A549 (cell line): ENCODE measurements at regions of chr7 and their contacts with region 1.

Region 1: DNA sequence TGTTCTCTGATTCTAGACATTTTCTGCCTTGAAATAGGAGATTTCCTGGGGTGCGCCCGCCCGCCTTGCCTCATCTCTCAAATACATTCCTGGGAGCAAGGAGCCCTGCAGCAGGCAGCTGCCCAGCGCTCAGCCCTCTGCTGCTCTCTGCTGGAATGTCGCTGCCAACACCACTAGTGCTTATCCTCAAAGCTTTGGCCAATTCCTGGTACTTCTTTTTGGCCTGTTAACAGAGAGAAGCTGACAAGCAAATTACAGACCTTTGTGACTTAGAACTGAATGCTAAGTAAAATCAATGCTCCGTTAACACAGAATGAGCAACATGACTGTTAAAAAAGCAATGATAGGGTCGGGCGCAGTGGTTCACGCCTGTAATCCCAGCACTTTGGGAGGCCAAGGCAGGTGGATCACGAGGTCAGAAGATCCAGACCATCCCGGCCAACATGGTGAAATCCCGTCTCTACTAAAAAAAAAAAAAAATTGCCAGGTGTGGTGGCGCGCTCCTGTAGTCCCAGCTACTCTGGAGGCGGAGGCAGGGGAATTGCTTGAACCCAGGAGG is 41.9 kb upstream of the SYPL1 start:
- DNase-seq: peak; percentile 75 to 84
- ATAC-seq: peak; percentile 97 to 99
- H3K4me3 ChIP-seq: no peak overlapping the region
- H3K27ac ChIP-seq: no peak overlapping the region
- H3K4me1 ChIP-seq: peaks cover 20% of the 10 kb centered on the region; the same call in 2 of the 3 replicates
- CTCF ChIP-seq: peak; percentile 87
- EP300 ChIP-seq: no peak
- POLR2A ChIP-seq: no peak
- RAD21 ChIP-seq: peak; percentile 98 to 99

Region 2: GRCh38 chr7:105759670-105760550 is 394.1 kb before region 1 on chr7:
- CTCF ChIA-PET with region 1: interaction called, 39 read pairs
- POLR2A ChIA-PET with region 1: no interaction called
- DNase-seq: peak; percentile 66 to 71
- ATAC-seq: peak; percentile 91 to 93
- H3K4me3 ChIP-seq: no peak overlapping the region
- H3K27ac ChIP-seq: no peak overlapping the region
- H3K4me1 ChIP-seq: no peaks in the 10 kb centered on the region
- CTCF ChIP-seq: peak; percentile 94
- EP300 ChIP-seq: no peak
- POLR2A ChIP-seq: no peak
- RAD21 ChIP-seq: peak; percentile 93 to 94

Region 3: GRCh38 chr7:106056513-106057203 is 97.3 kb before region 1 on chr7:
- CTCF ChIA-PET with region 1: interaction called, 487 read pairs
- POLR2A ChIA-PET with region 1: no interaction called
- DNase-seq: peak; percentile 77 to 81
- ATAC-seq: peak; percentile 91 to 99
- H3K4me3 ChIP-seq: no peak overlapping the region
- H3K27ac ChIP-seq: no peak overlapping the region
- H3K4me1 ChIP-seq: no peaks in the 10 kb centered on the region
- CTCF ChIP-seq: peak; percentile 85
- EP300 ChIP-seq: no peak
- POLR2A ChIP-seq: no peak
- RAD21 ChIP-seq: peak; percentile 88 to 94

Region 4: GRCh38 chr7:106127984-106128780 is 25.8 kb before region 1 on chr7:
- CTCF ChIA-PET with region 1: interaction called, 10 read pairs
- POLR2A ChIA-PET with region 1: no interaction called
- DNase-seq: no peak
- ATAC-seq: no peak
- H3K4me3 ChIP-seq: no peak overlapping the region
- H3K27ac ChIP-seq: no peak overlapping the region
- H3K4me1 ChIP-seq: peaks cover 7% of the 10 kb centered on the region; the same call in 2 of the 3 replicates
- CTCF ChIP-seq: no peak
- EP300 ChIP-seq: no peak
- POLR2A ChIP-seq: no peak
- RAD21 ChIP-seq: no peak

Region 5: DNA sequence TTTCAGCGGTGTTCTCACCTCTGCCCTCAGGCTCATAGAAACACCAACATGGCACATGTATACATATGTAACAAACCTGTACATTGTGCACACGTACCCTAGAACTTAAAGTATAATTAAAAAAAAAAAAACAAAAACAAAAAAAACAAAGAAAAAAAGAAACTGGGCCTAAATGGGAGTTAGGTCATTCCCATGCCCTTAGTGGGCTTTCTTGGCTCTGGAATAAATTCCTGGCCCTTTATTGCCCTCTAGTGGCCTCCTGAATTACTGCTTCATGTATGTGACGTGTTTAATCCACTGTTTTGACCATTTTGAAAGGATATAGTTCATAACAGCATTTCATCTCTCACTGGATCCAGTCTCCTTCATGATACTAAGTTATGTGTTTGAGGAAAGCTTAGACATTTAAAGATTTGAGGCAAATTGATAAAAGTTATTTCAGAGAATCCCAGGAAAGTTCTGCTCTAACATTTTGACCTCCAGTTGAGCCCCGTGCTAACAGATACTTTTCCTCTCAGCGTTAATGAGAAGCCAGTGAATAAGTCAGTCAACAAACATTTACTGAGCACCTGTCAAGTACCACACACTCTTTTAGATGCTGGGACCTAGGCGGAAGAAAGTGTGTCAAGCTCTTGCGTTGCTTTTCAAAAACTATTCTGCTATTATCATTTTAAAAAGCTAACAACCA is 12.8 kb after region 1 on chr7:
- CTCF ChIA-PET with region 1: interaction called, 94 read pairs
- POLR2A ChIA-PET with region 1: no interaction called
- DNase-seq: peak; percentile 68 to 76
- ATAC-seq: peak; percentile 70 to 92; a peak in 4 of 6 replicates
- H3K4me3 ChIP-seq: no peak overlapping the region
- H3K27ac ChIP-seq: no peak overlapping the region
- H3K4me1 ChIP-seq: no peaks in the 10 kb centered on the region
- CTCF ChIP-seq: peak; percentile 87
- EP300 ChIP-seq: no peak
- POLR2A ChIP-seq: no peak
- RAD21 ChIP-seq: peak; percentile 72 to 78